ENCODE measurements at regions of chr18 and their contacts with region 1.

Region 1: GRCh38 chr18:6994771-6995435 is 122.7 kb downstream of the LAMA1 start:
- DNase-seq: peak; percentile 99
- H3K4me3 ChIP-seq: peak overlapping the region in 2 of 3 experiments; percentile 0 to 30
- H3K27ac ChIP-seq: peak overlapping the region; percentile 93
- H3K4me1 ChIP-seq: peaks cover 18% of the 10 kb centered on the region
- H3K27me3 ChIP-seq: no peaks in the 10 kb centered on the region
- CTCF ChIP-seq: no peak

Region 2: GRCh38 chr18:6821356-6821755 is 173.5 kb before region 1 on chr18:
- CTCF ChIA-PET with region 1: no interaction called
- dilution Hi-C with region 1: no loop called
- in situ Hi-C with region 1: no loop called
- intact Hi-C with region 1: no loop called
- DNase-seq: no peak
- H3K4me3 ChIP-seq: no peak overlapping the region
- H3K27ac ChIP-seq: no peak overlapping the region
- H3K4me1 ChIP-seq: no peaks in the 10 kb centered on the region
- H3K27me3 ChIP-seq: no peaks in the 10 kb centered on the region
- CTCF ChIP-seq: no peak

Region 3: DNA sequence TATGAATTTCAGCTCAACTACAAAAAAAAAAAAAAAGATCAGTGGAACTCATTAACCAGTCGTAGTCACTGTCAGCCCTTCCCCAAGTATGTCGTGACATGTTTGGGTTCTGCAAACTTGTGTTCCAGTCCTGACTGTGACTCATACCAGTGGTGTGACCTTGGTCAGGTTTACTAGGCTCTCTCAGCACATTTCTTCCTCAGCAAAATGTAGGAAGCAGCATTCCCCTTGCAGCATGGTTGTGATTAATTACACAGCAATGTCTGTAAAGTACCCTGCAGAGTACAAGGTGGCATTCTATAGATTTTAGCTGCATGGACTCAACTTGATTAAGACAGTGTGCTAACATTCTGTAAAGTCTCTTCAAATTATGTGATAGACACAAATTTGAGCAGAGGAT is 34.2 kb before region 1 on chr18:
- CTCF ChIA-PET with region 1: no interaction called
- dilution Hi-C with region 1: no loop called
- in situ Hi-C with region 1: no loop called
- intact Hi-C with region 1: loop called (anchors 2 kb)
- DNase-seq: peak; percentile 85
- H3K4me3 ChIP-seq: no peak overlapping the region
- H3K27ac ChIP-seq: peak overlapping the region; percentile 56
- H3K4me1 ChIP-seq: peaks cover 33% of the 10 kb centered on the region
- H3K27me3 ChIP-seq: no peaks in the 10 kb centered on the region
- CTCF ChIP-seq: no peak

Measured in mammary epithelial cell (primary cell).